ENCODE measurements at regions of chr9 and their contacts with region 1.

Region 1: GRCh38 chr9:27204578-27204977 is 92.4 kb downstream of the EQTN start:
- DNase-seq: no peak
- ATAC-seq: no peak
- H3K4me3 ChIP-seq: no peak overlapping the region
- H3K27ac ChIP-seq: no peak overlapping the region
- H3K4me1 ChIP-seq: no peaks in the 10 kb centered on the region
- H3K27me3 ChIP-seq: no peaks in the 10 kb centered on the region
- CTCF ChIP-seq: no peak
- POLR2A ChIP-seq: no peak

Region 2: DNA sequence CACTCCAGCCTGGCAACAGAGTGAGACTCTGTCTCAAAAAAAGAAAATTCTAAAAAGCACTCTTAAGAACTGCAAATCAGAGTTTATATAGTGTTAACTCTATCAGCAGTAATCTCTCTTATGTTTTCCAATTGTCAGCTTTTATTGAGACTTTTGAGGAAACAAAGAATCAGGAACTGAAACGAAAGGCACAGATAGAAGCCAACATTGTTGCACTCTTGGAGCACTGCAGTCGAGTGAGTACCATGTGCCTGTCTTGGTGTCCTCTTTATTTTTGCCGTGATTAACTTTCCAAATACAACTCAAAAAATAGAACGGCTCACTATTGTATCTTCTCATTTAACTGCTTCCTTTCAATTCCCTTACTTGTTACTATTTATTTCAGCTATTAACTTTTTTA is 157.4 kb before region 1 on chr9:
- intact Hi-C with region 1: loop called in 2 of 10 experiments (anchors 10 kb)
- DNase-seq: no peak
- ATAC-seq: peak in 1 of 4 donors; percentile 27
- H3K4me3 ChIP-seq: no peak overlapping the region
- H3K27ac ChIP-seq: peak overlapping the region in 1 of 12 donors; percentile 24
- H3K4me1 ChIP-seq: no peaks in the 10 kb centered on the region
- H3K27me3 ChIP-seq: no peaks in the 10 kb centered on the region
- CTCF ChIP-seq: no peak
- POLR2A ChIP-seq: no peak

Region 3: GRCh38 chr9:27065288-27065687 is 139.3 kb before region 1 on chr9:
- intact Hi-C with region 1: loop called in 1 of 10 experiments (anchors 5 kb)
- DNase-seq: no peak
- ATAC-seq: no peak
- H3K4me3 ChIP-seq: no peak overlapping the region
- H3K27ac ChIP-seq: no peak overlapping the region
- H3K4me1 ChIP-seq: peaks cover 0 to 4% (median 0%) of the 10 kb centered on the region in 12 donors
- H3K27me3 ChIP-seq: no peaks in the 10 kb centered on the region
- CTCF ChIP-seq: no peak
- POLR2A ChIP-seq: no peak